Dorsolateral prefrontal cortex (tissue), 120 donors: ENCODE measurements at regions of chr3 and their contacts with region 1.

Region 1: DNA sequence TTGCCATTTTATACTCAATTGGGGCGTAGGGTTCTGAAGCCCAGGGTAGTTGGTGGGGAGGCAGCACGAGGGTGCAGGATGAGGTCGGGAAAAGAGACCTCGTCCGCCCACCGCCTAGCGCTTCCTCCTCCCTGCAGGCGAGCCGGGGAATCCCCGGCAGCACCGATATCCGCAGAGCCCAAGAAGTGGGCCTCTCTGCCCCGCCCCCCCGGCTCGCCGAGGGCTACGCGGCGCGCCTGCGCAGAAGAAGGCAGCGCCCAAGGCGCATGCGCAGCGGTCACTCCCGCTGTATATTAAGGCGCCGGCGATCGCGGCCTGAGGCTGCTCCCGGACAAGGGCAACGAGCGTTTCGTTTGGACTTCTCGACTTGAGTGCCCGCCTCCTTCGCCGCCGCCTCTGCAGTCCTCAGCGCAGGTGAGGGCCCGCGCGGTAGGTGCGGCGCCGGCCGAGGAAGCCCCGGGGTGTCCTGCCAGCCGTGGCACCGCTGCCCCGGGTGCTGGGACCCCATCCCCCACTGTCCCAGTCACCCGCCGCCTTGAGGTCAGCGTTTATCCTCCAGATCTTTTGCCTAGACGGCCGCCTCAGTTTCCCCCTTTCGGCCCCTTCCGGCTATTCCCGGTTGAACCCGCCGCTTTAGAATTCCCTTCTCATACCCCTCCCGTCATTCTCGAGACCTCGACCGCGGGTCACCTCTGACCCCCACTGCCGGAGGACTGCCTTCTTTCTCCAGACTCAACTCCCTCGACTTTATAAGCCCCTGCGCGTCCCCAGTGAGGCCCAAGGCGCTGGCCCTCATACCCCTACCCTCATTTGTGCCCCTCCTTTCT is at the start of gene ALAS1:
- DNase-seq: peak; percentile 83 to 96 (median 84)
- H3K4me3 ChIP-seq: peak within 1 kb of the TSS; percentile 62 to 100 (median 97)
- H3K27ac ChIP-seq: peak within 1 kb of the TSS in 58 of 59 donors; percentile 75 to 96 (median 89)
- H3K27me3 ChIP-seq: no peaks in the 10 kb centered on the region
- CTCF ChIP-seq: peak in 39 of 56 donors; percentile 8 to 52 (median 31)
- total RNA-seq, gene ALAS1: 34.8 to 81.1 (median 55.4) TPM

Region 2: DNA sequence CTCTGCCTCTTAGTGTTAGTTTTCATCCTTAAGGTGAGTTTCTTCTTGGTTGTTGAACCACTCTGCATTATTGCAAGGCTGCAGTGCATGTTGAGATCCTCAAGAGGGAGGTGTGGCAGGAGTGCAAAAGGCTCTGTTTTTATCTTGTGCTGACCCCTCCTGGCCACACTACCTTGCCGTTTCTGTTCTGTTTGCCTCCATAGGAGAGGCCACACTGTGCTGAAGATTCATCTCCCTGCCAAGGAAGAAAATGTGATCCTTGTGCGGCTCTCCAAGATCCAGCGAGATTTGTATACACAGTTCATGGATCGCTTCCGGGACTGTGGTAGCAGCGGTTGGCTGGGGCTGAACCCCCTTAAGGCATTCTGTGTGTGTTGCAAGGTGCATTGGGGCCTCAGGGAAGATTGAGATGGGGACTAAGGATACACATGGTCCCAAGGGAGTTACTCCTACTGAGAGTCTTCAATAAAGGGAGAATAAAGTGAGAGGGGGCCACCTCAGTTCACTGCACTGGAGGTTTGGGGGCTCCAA is 560.0 kb before region 1 on chr3:
- intact Hi-C with region 1: no loop called
- DNase-seq: no peak
- H3K4me3 ChIP-seq: no peak overlapping the region
- H3K27ac ChIP-seq: no peak overlapping the region
- H3K27me3 ChIP-seq: no peaks in the 10 kb centered on the region
- CTCF ChIP-seq: peak in 52 of 56 donors; percentile 7 to 64 (median 42)

Region 3: DNA sequence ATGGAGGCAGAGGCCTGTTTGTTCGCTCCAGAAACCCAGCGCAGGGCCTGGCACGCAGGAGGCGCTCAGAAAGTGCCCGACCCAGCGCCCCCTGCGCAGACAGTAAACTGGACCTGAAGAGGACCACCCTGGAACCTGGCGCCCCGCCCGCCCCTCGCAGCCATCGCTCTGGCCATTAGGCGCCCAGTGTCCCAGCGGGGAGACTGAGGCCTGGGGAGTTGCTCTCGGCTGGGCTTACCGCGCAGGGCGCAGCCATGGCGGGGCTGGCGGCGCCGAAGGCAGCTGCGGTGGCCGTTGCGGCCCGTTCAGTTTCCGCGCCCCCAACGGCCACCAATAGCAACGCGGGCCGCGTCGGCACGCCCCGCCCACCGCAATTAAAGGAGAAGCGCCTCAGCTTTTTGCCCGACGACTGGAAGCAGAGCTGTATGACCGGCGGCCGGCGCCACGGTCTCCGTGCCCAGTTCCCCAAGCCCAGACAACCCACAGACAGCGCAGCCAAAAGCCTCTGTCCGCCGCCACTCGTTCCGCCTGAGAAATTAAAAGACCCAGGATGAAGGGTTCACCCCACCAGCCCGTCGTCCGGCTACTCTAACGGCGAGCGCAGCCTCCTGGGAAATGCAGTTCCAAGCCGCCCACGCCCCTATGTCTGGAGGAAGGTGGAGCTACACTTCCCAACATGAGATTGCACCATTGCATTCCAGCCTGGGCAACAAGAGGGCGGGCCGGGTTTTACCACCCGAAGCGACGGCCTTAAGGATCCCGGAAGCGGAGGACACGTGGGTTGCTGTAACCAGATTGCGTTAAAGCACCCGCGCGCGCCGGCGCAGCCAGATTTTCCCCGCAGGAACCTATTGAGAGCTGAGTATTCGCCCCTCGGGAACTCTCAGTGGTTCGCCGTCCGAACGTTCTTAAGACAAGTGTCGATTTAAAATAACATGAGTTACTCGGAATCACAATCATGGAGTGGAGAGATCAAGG is 43.6 kb before region 1 on chr3 and contains the start of gene POC1A:
- intact Hi-C with region 1: loop called (anchors 2 kb)
- DNase-seq: peak; percentile 84 to 99 (median 95)
- H3K4me3 ChIP-seq: peak within 1 kb of the TSS; percentile 55 to 99 (median 77)
- H3K27ac ChIP-seq: peak within 1 kb of the TSS; percentile 40 to 96 (median 88)
- H3K27me3 ChIP-seq: no peaks in the 10 kb centered on the region
- CTCF ChIP-seq: peak in 42 of 56 donors; percentile 5 to 59 (median 32)
- total RNA-seq, gene POC1A: 1.3 to 5.8 (median 3.0) TPM

Region 4: DNA sequence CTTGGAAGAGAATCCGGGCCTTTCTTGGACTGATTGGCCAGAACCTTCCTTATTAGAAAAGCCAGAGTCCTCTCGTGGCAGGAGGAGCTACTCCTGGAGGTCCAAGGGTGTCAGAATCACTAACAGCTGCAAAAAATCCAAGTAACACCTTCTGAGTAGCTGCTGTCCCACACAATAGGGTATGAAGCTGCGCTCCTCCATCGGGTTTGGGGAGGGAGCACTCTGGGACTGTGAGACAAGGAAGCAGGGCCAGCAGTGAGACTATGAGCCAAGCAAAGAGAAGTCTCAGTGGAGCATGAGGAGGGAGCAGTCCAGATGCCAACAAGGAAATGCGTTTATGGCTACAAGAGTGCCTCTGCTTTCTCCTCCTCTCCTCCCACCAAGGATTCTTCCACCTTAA is 225.1 kb after region 1 on chr3:
- intact Hi-C with region 1: no loop called
- DNase-seq: peak in 1 of 10 donors; percentile 3
- H3K4me3 ChIP-seq: no peak overlapping the region
- H3K27ac ChIP-seq: no peak overlapping the region
- H3K27me3 ChIP-seq: no peaks in the 10 kb centered on the region
- CTCF ChIP-seq: no peak

Region 5: DNA sequence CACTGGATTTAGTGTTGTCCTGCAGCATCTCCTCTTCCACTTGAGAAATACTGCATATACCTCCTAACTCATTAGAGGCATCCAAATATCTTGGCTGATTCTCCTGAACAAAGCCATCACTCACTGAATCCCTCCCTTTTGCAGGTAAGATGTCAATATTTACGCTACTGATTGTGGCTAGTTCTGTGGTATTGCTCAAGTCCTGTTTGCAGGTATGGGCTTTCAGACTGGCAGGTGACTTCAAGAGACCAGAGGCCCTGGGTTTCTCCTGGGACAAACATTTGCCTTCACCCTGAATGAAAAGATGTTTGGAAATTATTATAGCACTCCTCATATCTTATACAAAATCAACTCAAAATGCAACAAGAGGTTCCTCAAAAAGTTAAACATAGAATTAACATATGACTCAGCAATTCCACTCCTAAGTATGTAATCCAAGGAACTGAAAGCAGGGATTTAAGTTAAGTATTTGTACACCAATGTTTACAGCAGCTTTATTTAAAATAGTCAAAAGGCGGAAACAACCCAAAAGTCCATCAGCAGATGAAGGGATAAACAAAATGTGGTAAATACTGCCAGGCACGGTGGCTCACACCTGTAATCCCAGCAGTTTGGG is 554.1 kb after region 1 on chr3:
- intact Hi-C with region 1: no loop called
- DNase-seq: no peak
- H3K4me3 ChIP-seq: no peak overlapping the region
- H3K27ac ChIP-seq: no peak overlapping the region
- H3K27me3 ChIP-seq: no peaks in the 10 kb centered on the region
- CTCF ChIP-seq: no peak